PC-9 (cell line): ENCODE measurements at regions of chr10 and their contacts with region 1.

Region 1: GRCh38 chr10:75283671-75284470 is 48.1 kb upstream of the COMTD1 start:
- DNase-seq: no peak
- H3K4me3 ChIP-seq: no peak overlapping the region
- H3K27ac ChIP-seq: no peak overlapping the region
- H3K4me1 ChIP-seq: peaks cover 19% of the 10 kb centered on the region
- H3K27me3 ChIP-seq: no peaks in the 10 kb centered on the region
- CTCF ChIP-seq: no peak

Region 2: DNA sequence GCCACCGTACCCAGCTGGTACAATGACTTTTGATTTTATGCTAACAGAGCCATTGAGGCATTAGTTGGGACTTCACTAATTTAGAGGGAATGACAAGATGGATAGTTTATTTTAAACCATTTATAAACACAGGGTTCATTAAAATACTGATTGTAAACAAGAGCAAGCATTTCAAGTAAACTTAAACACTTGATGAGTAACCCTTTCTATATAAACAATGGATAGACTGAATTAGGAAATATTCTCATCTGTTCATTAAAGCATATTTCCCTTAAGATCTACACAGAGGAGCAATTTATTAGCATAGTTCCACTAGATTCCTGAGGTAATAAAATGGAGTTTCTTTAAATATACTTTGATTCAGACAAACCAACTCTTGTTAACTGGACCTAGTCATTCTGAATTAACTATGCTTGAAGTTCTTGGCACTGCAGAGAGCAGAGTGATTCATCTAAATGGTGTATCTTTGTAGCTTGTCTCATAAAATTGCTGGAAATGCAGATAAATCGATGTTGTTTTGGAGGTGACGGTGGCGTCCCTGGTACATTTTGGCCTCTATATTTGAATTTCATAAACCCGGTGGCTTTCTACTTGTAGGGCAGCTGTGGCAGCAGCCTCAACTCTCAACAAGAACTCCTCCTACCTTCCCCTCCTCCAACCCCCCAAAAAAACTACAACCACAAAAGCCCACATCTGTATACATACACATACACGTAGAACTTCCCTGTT is 88.7 kb before region 1 on chr10:
- CTCF ChIA-PET with region 1: no interaction called
- POLR2A ChIA-PET with region 1: interaction called, 12 read pairs
- intact Hi-C with region 1: no loop called
- DNase-seq: peak in 1 of 2 experiments; percentile 57
- H3K4me3 ChIP-seq: no peak overlapping the region
- H3K27ac ChIP-seq: no peak overlapping the region
- H3K4me1 ChIP-seq: peaks cover 36% of the 10 kb centered on the region
- H3K27me3 ChIP-seq: no peaks in the 10 kb centered on the region
- CTCF ChIP-seq: no peak

Region 3: GRCh38 chr10:75461672-75462649 is 178.1 kb after region 1 on chr10:
- CTCF ChIA-PET with region 1: no interaction called
- POLR2A ChIA-PET with region 1: no interaction called
- intact Hi-C with region 1: no loop called
- DNase-seq: no peak
- H3K4me3 ChIP-seq: no peak overlapping the region
- H3K27ac ChIP-seq: no peak overlapping the region
- H3K4me1 ChIP-seq: 0 out of 2 replicates have a peak, but pooled peaks cover under 1% of the 10 kb centered on the region
- H3K27me3 ChIP-seq: no peaks in the 10 kb centered on the region
- CTCF ChIP-seq: no peak